ENCODE measurements at regions of chr19 and their contacts with region 1.

Region 1: DNA sequence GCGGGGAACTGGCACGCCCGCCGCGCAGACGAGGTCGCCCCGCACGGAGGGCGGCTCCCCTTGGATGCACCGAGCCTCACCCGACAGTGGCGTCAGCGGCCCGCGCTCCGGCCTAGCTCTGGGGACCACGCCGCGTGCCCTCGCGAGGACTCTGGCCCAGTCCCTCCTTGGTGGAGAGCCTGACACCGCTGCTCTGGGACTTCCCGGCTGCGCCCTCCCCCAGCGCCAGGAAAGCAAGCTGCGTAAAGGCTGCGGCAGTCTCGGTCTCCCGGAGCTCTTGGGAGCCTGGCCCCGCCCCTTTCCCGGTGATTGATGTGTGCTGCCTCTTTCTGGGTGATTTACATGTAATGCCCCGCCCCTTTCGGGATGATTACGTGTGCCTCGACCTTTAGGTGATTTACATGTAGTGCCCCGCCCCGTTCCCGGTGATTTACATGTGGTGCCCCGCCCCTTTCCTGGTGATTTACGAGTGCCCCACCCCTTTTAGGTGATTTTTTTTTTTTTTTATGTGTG is at the start of gene LENG9:
- DNase-seq: peak; percentile 97 to 100
- H3K4me3 ChIP-seq: peak within 1 kb of the TSS; percentile 71 to 79
- H3K27ac ChIP-seq: peak within 1 kb of the TSS; percentile 97
- H3K4me1 ChIP-seq: peaks cover 14 to 20% of the 10 kb centered on the region in 2 donors
- H3K27me3 ChIP-seq: no peaks in the 10 kb centered on the region
- CTCF ChIP-seq: no peak
- total RNA-seq, gene LENG9: 10.1 TPM

Region 2: GRCh38 chr19:54102421-54103169 is 361.0 kb before region 1 on chr19 and contains the start of gene NDUFA3:
- intact Hi-C with region 1: loop called (anchors 10 kb)
- DNase-seq: peak; percentile 97 to 99
- H3K4me3 ChIP-seq: peak within 1 kb of the TSS; percentile 72 to 83
- H3K27ac ChIP-seq: peak within 1 kb of the TSS in 1 of 2 donors; percentile 67
- H3K4me1 ChIP-seq: peaks cover 0 to 7% of the 10 kb centered on the region in 2 donors
- H3K27me3 ChIP-seq: no peaks in the 10 kb centered on the region
- CTCF ChIP-seq: no peak
- total RNA-seq, gene NDUFA3: 12.5 TPM

Region 3: GRCh38 chr19:54189735-54190502 is 273.7 kb before region 1 on chr19:
- intact Hi-C with region 1: loop called (anchors 5 kb)
- DNase-seq: peak; percentile 100
- H3K4me3 ChIP-seq: peak overlapping the region; percentile 81 to 85
- H3K27ac ChIP-seq: peak overlapping the region; percentile 100
- H3K4me1 ChIP-seq: peaks cover 6 to 20% of the 10 kb centered on the region in 2 donors
- H3K27me3 ChIP-seq: no peaks in the 10 kb centered on the region
- CTCF ChIP-seq: no peak

Region 4: GRCh38 chr19:54439174-54439853 is 24.3 kb before region 1 on chr19:
- intact Hi-C with region 1: no loop called
- DNase-seq: no peak
- H3K4me3 ChIP-seq: no peak overlapping the region
- H3K27ac ChIP-seq: no peak overlapping the region
- H3K4me1 ChIP-seq: no peaks in the 10 kb centered on the region
- H3K27me3 ChIP-seq: no peaks in the 10 kb centered on the region
- CTCF ChIP-seq: peak in 2 of 3 experiments; percentile 12 to 18

Region 5: DNA sequence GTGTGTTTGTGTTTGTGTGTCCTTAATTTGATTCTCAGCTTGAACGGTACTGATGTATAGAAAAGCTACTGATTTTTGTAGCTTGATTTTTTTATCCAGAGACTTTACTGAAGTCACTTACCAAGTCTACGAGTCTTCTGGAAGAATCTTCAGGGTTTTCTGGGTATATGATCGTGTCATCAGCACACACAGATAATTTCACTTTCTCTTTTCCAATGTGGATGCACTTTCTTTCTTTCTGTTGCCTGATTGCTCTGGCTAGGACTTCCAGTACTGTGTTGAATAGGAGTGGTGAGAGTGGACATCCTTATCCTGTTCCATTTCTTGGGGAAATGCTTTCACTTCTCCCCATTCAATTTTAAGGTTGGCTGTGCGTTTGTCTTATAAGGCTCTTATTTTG is 158.8 kb after region 1 on chr19:
- intact Hi-C with region 1: no loop called
- DNase-seq: no peak
- H3K4me3 ChIP-seq: no peak overlapping the region
- H3K27ac ChIP-seq: no peak overlapping the region
- H3K4me1 ChIP-seq: no peaks in the 10 kb centered on the region
- H3K27me3 ChIP-seq: no peaks in the 10 kb centered on the region
- CTCF ChIP-seq: no peak

Region 6: DNA sequence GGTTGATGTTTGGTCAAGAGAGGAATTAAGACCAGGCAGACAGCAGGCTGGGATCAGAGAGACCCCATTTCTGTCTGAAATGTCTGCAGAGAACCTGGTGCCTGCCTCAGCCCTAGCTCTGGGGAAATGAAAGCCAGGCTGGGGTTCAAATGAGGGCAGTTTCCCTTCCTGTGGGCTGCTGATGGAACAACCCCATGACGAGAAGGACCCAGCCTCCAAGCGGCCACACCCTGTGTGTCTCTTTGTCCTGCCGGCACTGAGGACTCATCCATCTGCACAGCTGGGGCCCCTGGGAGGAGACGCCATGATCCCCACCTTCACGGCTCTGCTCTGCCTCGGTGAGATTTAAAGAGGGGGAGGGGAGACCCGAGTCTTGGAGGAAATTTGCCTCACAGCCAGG is 199.1 kb after region 1 on chr19 and contains the start of gene LILRB4:
- intact Hi-C with region 1: no loop called
- DNase-seq: peak in 1 of 2 donors; percentile 67
- H3K4me3 ChIP-seq: peak within 1 kb of the TSS in 1 of 2 donors; percentile 15
- H3K27ac ChIP-seq: no peak within 1 kb of the TSS
- H3K4me1 ChIP-seq: no peaks in the 10 kb centered on the region
- H3K27me3 ChIP-seq: no peaks in the 10 kb centered on the region
- CTCF ChIP-seq: no peak
- total RNA-seq, gene LILRB4: 0.64 TPM

Region 7: DNA sequence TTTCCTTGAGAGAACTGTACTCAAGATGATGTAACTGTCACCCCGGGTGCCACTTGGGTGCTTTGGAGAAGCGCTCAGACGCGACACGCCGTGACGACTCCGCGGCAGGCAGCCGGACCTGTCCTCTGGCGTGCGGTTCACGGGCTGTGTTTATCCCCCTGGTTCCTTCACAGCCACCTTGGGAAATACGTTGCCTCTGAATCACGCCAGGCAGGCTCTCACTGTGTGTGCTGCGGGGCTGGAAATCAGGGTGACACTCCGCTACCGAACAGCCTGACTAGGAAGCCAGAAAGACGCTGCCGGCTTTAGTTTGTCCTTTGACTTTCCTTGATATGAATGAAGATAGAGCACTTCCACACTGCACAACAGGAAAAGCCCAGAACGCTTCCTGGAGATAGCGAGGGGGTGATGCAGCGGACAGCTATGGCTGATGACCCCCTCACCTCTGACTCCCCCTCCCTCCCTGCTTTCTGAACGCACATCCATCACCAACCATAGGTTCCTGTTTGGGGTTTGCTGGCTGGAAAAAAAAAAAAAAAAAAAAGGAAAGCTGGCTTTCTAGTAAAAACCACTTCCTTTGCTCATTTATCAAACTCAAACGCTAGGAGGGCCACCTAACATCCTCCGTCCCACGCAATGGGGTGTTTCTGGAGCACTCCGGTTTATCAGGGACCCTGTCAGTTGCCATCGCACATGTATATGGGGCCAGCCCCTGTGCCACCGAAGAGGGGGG is 578.2 kb after region 1 on chr19:
- intact Hi-C with region 1: no loop called
- DNase-seq: no peak
- H3K4me3 ChIP-seq: no peak overlapping the region
- H3K27ac ChIP-seq: no peak overlapping the region
- H3K4me1 ChIP-seq: no peaks in the 10 kb centered on the region
- H3K27me3 ChIP-seq: no peaks in the 10 kb centered on the region
- CTCF ChIP-seq: no peak

Region 8: DNA sequence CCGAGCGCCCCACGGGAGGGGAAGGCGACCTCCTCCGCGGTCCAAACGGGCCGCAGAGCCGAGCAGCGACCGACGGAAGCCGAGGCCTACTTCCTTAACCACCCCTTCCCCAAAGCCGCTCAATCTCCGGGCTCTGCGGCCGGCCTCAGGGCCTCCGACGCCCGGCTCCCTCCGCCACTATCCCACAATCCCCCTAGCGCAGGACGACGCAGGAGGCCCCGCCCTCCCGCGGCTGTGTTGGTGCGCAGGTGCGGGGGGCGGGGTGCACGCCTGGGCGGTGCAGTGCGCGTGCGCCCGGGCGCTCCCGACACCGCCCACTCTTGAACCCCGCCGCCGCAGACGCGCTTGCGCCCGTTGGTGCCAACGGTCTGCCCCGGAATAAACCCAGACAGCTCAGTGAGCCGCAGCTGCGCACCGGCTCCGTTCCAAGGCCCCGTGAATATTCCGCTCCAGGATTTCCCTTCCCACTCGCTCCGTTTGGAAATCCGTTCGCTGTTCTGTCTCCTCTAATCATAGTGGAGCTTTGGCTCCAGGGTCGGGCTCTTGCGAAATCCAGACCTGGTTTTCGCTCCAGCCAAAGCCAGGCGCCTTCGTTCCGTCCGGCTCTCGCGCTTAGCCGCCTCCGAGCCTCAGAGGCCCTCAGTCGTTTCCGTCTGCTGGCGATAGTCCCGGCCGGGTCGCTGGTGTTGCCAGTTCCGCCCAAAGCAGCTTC is 795.4 kb after region 1 on chr19 and contains the start of gene PPP6R1:
- intact Hi-C with region 1: loop called (anchors 10 kb)
- DNase-seq: peak; percentile 92 to 99
- H3K4me3 ChIP-seq: peak within 1 kb of the TSS; percentile 85 to 87
- H3K27ac ChIP-seq: peak within 1 kb of the TSS; percentile 84 to 88
- H3K4me1 ChIP-seq: peaks cover 8 to 24% of the 10 kb centered on the region in 2 donors
- H3K27me3 ChIP-seq: no peaks in the 10 kb centered on the region
- CTCF ChIP-seq: peak in 1 of 3 experiments; percentile 15
- total RNA-seq, gene PPP6R1: 68.3 TPM

Region 9: GRCh38 chr19:55476100-55476775 is 1012.7 kb after region 1 on chr19 and contains the start of gene ZNF628:
- intact Hi-C with region 1: loop called (anchors 10 kb)
- DNase-seq: peak; percentile 93 to 99
- H3K4me3 ChIP-seq: peak within 1 kb of the TSS; percentile 82 to 84
- H3K27ac ChIP-seq: peak within 1 kb of the TSS; percentile 95 to 99
- H3K4me1 ChIP-seq: peaks cover 8 to 11% of the 10 kb centered on the region in 2 donors
- H3K27me3 ChIP-seq: no peaks in the 10 kb centered on the region
- CTCF ChIP-seq: no peak
- total RNA-seq, gene ZNF628: 13.2 TPM